Ovary (tissue), 10 donors: ENCODE measurements at regions of chr19 and their contacts with region 1.

Region 1: GRCh38 chr19:19531951-19532805 is 3.5 kb downstream of the YJEFN3 start:
- DNase-seq: peak; percentile 76 to 93 (median 89)
- H3K4me3 ChIP-seq: no peak overlapping the region
- H3K27ac ChIP-seq: no peak overlapping the region
- H3K4me1 ChIP-seq: no peaks in the 10 kb centered on the region
- H3K27me3 ChIP-seq: no peaks in the 10 kb centered on the region
- CTCF ChIP-seq: peak; percentile 92 to 94 (median 92)
- EP300 ChIP-seq: no peak
- POLR2A ChIP-seq: no peak

Region 2: DNA sequence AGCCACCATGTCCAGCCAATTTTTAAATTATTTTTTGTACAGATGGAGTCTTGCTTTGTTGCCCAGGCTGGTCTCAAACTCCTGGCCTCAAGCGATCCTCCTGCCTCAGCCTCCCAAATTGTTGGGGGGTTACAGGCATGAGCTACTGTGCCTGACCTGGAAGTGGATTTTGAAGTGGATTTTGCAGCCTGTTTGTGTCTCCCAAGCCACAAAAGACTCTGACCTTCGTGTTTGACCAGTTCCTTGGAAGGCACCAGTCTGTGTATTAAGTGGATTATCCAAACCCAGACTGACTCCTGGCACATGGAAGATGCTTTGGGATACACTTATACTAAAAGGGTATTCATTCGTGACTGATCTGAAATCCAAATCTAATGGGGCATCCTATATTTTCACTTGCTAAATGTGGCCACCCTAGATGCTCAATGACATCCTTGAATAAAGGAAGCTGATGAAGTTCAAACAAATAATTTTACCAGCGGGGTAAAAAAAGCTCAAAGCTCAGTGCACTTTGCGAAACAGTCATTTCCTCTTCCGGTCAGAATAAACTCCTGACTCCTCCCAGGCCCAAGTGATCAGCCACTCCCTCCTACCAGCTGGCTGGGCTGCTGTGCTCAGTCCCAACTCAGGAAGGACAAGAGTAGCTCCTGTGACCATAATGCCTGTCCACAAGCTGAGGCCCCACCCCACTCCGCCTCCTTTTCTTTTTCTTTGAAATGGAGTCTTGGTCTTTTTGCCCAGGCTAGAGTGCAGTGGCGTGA is 159.3 kb before region 1 on chr19:
- intact Hi-C with region 1: no loop called
- DNase-seq: no peak
- H3K4me3 ChIP-seq: no peak overlapping the region
- H3K27ac ChIP-seq: no peak overlapping the region
- H3K4me1 ChIP-seq: no peaks in the 10 kb centered on the region
- H3K27me3 ChIP-seq: no peaks in the 10 kb centered on the region
- CTCF ChIP-seq: no peak
- EP300 ChIP-seq: no peak
- POLR2A ChIP-seq: no peak

Region 3: GRCh38 chr19:19643158-19644053 is 111.2 kb after region 1 on chr19 and contains the start of gene GMIP:
- intact Hi-C with region 1: loop called (anchors 1 to 5 kb)
- DNase-seq: peak; percentile 69 to 85 (median 80)
- H3K4me3 ChIP-seq: peak within 1 kb of the TSS; percentile 66
- H3K27ac ChIP-seq: no peak within 1 kb of the TSS
- H3K4me1 ChIP-seq: no peaks in the 10 kb centered on the region
- H3K27me3 ChIP-seq: no peaks in the 10 kb centered on the region
- CTCF ChIP-seq: peak; percentile 79 to 95 (median 80)
- EP300 ChIP-seq: no peak
- POLR2A ChIP-seq: no peak
- total RNA-seq, gene GMIP: 3.9 to 6.9 (median 5.2) TPM